Adrenal gland (tissue), 19 donors: ENCODE measurements at regions of chr15 and their contacts with region 1.

Region 1: GRCh38 chr15:90249203-90249863 is at the start of gene TTLL13:
- DNase-seq: peak; percentile 95 to 99 (median 97)
- H3K4me3 ChIP-seq: peak within 1 kb of the TSS in 2 of 4 donors; percentile 56 to 91
- H3K27ac ChIP-seq: no peak within 1 kb of the TSS
- H3K4me1 ChIP-seq: peaks cover 4 to 5% of the 10 kb centered on the region in 2 donors
- H3K27me3 ChIP-seq: no peaks in the 10 kb centered on the region
- CTCF ChIP-seq: peak in 1 of 6 experiments; percentile 7
- POLR2A ChIP-seq: peak in 1 of 2 donors; percentile 35
- total RNA-seq, gene TTLL13: 0.17 to 0.43 (median 0.35) TPM in 4 of 9 donors, not detected in the others

Region 2: GRCh38 chr15:89851673-89852341 is 397.5 kb before region 1 on chr15:
- intact Hi-C with region 1: no loop called
- DNase-seq: no peak
- H3K4me3 ChIP-seq: no peak overlapping the region
- H3K27ac ChIP-seq: no peak overlapping the region
- H3K4me1 ChIP-seq: peaks cover 0 to 19% of the 10 kb centered on the region in 2 donors
- H3K27me3 ChIP-seq: no peaks in the 10 kb centered on the region
- CTCF ChIP-seq: no peak
- POLR2A ChIP-seq: no peak

Region 3: DNA sequence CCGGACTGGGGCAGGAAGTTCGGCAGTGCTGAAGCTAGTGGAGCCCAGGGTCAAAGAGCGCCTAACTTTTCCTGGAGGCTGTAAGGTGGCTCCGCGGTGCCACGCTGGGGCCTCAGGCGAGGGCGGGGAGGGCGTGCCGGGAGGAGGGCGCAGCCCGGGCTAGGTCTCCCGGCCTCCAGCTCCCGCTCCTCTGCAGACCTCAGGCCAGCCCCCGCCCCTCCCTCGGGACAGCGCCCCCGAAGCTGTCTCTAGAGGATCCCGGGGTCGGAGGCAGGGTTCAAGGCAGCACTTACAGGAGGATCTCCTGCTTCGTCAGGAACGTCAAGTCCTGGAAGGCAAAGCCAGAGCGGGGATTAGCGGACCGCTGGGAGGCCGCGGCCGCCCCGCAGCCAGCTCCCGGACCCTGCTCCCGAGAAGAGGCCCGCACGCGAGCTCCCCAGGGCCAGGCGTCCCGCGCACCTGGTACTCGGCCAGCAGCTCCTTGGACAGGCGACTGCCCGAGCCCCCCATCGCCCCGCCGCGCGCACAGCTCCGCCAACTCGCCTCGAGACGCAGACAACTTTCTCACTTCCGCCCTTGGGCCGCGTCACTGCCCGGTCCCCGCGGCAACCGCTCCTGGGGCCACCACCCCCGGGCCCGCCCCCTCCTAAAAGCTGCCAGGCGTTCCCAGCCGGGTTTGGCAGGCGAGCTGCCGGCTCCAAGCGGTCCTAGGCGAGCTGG is 15.8 kb before region 1 on chr15 and contains the start of gene CIB1:
- intact Hi-C with region 1: loop called in 1 of 2 experiments (anchors 2 kb)
- DNase-seq: peak; percentile 98
- H3K4me3 ChIP-seq: peak within 1 kb of the TSS; percentile 37 to 76 (median 72)
- H3K27ac ChIP-seq: peak within 1 kb of the TSS; percentile 92 to 97 (median 94)
- H3K4me1 ChIP-seq: peaks cover 41 to 53% of the 10 kb centered on the region in 2 donors
- H3K27me3 ChIP-seq: no peaks in the 10 kb centered on the region
- CTCF ChIP-seq: peak in 3 of 6 experiments; percentile 19 to 59 (median 45)
- POLR2A ChIP-seq: peak; percentile 46 to 85
- total RNA-seq, gene CIB1: 38.8 to 191 (median 108) TPM